ENCODE measurements at regions of chr9 and their contacts with region 1.

Region 1: DNA sequence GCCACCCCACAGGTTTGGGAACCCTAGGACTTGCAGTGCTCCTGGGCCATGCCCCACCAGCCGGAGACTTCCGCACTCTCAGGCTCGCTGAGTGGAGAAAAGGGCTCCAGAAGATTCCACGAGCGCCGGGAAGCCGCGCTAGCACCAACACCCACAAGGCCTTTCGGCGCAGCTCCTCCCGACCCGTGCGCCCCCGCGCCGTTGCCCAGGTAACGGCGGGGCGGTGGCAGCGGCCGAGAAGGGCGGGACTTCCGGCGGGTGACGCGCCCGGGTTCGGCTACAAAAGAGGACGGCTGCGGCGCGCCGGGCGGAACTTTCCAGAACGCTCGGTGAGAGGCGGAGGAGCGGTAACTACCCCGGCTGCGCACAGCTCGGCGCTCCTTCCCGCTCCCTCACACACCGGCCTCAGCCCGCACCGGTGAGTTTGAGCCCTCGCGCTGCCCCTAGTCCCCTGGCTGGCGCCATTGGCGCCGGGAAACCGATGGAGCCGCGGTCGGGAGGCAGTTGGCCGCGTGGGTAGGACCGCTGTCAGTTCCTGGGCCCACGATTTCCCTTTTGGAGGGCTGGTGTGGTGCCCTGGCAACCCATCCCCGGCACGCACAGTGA is at the start of gene DNAJA1:
- DNase-seq: peak; percentile 94
- ATAC-seq: peak; percentile 80
- H3K4me3 Mint-ChIP-seq: peak within 1 kb of the TSS; percentile 99
- H3K27ac Mint-ChIP-seq: peak within 1 kb of the TSS; percentile 92
- H3K4me1 Mint-ChIP-seq: peaks cover 55% of the 10 kb centered on the region
- H3K27me3 Mint-ChIP-seq: no peaks in the 10 kb centered on the region
- CTCF ChIP-seq: no peak
- total RNA-seq, gene DNAJA1: 139 to 143 TPM

Region 2: DNA sequence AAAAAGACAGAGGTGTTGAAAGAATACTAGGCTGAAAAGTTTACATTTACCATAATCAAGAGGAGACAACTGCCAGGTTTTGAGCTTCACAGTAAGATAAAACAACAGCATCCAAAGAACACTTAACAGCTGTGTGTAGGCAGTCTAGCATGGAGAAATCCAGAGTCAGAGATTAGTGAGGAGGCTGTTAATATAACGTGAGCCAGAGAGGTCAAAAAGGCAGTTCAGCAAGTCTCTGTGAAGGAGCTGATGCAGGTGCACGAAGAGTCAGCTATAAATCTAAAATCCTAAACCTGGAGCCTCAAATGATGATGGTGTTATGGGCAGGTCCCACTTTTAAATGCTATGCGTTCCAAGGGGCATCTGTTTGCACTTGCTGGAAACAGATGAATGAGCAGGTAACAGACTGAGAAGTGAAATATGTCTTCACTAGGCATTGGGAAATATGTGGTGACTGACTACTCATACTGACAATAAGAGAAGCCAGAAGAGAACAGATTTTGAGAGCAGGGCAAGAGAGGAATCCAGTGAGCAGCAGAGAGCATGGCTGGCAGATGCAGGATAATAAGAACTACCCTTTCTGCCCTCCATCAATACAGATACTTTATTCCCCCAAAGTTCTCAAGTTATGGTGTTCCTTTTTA is 32.4 kb before region 1 on chr9:
- CTCF ChIA-PET with region 1: no interaction called
- POLR2A ChIA-PET with region 1: interaction called, 68 read pairs
- intact Hi-C with region 1: no loop called
- DNase-seq: no peak
- ATAC-seq: no peak
- H3K4me3 Mint-ChIP-seq: no peak overlapping the region
- H3K27ac Mint-ChIP-seq: peak overlapping the region; percentile 1
- H3K4me1 Mint-ChIP-seq: peaks cover 20% of the 10 kb centered on the region
- H3K27me3 Mint-ChIP-seq: no peaks in the 10 kb centered on the region
- CTCF ChIP-seq: no peak

Region 3: GRCh38 chr9:33044127-33044673 is 19.1 kb after region 1 on chr9:
- CTCF ChIA-PET with region 1: interaction called, 11 read pairs
- POLR2A ChIA-PET with region 1: interaction called, 127 read pairs
- intact Hi-C with region 1: no loop called
- DNase-seq: peak; percentile 85
- ATAC-seq: peak; percentile 88
- H3K4me3 Mint-ChIP-seq: peak overlapping the region; percentile 69
- H3K27ac Mint-ChIP-seq: peak overlapping the region; percentile 47
- H3K4me1 Mint-ChIP-seq: peaks cover 15% of the 10 kb centered on the region
- H3K27me3 Mint-ChIP-seq: no peaks in the 10 kb centered on the region
- CTCF ChIP-seq: no peak

Region 4: DNA sequence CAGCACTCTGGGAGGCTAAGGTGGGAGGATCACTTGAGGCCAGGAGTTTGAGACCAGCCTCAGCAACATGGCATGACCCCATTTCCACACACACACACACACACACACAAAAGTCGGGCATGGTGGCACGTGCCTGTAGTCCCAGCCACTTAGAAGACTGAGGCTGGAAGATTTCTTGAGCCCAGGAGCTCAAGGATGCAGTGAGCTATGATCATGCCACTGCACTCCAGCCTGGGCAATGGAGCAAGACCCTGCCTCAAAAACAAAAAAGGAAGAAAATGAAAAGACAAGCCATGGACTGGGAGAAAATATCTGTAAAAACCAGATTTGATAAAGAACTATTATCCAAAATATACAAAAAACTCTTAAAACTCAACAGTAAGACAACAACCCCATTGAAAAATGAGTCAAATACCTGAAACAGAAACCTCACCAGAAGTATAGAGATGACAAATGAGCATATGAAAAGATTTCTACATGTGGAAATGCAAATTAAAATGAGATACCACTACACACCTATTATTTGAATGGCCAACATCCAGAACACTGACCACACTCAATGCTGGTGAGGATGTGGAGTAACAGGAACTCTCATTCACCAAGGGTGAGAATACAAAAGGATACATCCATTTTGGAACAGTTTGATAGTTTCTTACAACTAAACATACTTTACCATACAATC is 24.8 kb after region 1 on chr9:
- CTCF ChIA-PET with region 1: interaction called, 4 read pairs
- POLR2A ChIA-PET with region 1: interaction called, 127 read pairs
- intact Hi-C with region 1: no loop called
- DNase-seq: no peak
- ATAC-seq: peak; percentile 67
- H3K4me3 Mint-ChIP-seq: no peak overlapping the region
- H3K27ac Mint-ChIP-seq: peak overlapping the region; percentile 67
- H3K4me1 Mint-ChIP-seq: peaks cover 12% of the 10 kb centered on the region
- H3K27me3 Mint-ChIP-seq: no peaks in the 10 kb centered on the region
- CTCF ChIP-seq: no peak

Region 5: GRCh38 chr9:33065157-33066076 is 40.3 kb after region 1 on chr9:
- CTCF ChIA-PET with region 1: no interaction called
- POLR2A ChIA-PET with region 1: interaction called, 11 read pairs
- intact Hi-C with region 1: no loop called
- DNase-seq: no peak
- ATAC-seq: no peak
- H3K4me3 Mint-ChIP-seq: no peak overlapping the region
- H3K27ac Mint-ChIP-seq: peak overlapping the region; percentile 39
- H3K4me1 Mint-ChIP-seq: peaks cover 12% of the 10 kb centered on the region
- H3K27me3 Mint-ChIP-seq: no peaks in the 10 kb centered on the region
- CTCF ChIP-seq: no peak

Region 6: DNA sequence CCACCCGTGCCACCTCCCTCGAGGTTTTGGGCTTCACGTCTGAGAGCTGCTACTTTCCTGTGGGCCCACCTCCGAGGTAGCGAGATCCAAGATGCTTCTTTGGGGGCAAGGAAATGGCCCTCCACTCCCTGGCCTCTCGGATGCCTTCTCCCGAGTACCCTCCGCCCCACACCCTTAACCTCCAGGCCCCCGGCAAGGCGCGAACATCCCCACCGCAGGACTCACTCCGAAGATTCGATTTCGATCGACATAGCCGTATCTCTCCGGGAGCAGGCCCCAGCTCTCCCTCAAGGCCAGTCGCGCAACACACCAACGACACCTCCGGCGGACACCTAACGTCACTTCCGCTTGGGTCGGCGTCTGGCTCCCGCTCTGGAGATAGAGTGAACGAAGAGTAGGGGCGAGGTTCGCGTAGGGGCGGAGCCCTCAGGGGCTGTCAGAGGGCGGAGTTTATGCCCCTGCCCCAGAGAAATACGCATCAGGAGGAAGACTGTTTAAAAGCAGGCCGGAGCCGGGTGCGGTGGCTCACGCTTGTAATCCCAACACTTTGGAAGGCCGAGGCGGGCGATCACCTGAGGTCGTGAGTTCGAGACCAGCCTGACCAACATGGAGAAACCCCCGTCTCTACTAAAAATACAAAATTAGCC is 51.4 kb after region 1 on chr9 and contains the start of gene SMU1:
- CTCF ChIA-PET with region 1: no interaction called
- POLR2A ChIA-PET with region 1: interaction called, 14 read pairs
- intact Hi-C with region 1: no loop called
- DNase-seq: peak; percentile 98
- ATAC-seq: peak; percentile 97
- H3K4me3 Mint-ChIP-seq: peak within 1 kb of the TSS; percentile 94
- H3K27ac Mint-ChIP-seq: peak within 1 kb of the TSS; percentile 99
- H3K4me1 Mint-ChIP-seq: peaks cover 48% of the 10 kb centered on the region
- H3K27me3 Mint-ChIP-seq: no peaks in the 10 kb centered on the region
- CTCF ChIP-seq: no peak
- total RNA-seq, gene SMU1: 23.8 to 23.9 TPM

Region 7: GRCh38 chr9:33264473-33265177 is 239.6 kb after region 1 on chr9 and contains the starts of genes BAG1 and CHMP5:
- CTCF ChIA-PET with region 1: no interaction called
- POLR2A ChIA-PET with region 1: interaction called, 14 read pairs
- intact Hi-C with region 1: no loop called
- DNase-seq: peak; percentile 100
- ATAC-seq: peak; percentile 98
- H3K4me3 Mint-ChIP-seq: peak within 1 kb of the TSS; percentile 99
- H3K27ac Mint-ChIP-seq: peak within 1 kb of the TSS; percentile 96
- H3K4me1 Mint-ChIP-seq: peaks cover 41% of the 10 kb centered on the region
- H3K27me3 Mint-ChIP-seq: no peaks in the 10 kb centered on the region
- CTCF ChIP-seq: no peak
- total RNA-seq, gene BAG1: 55.6 to 61.6 TPM
- total RNA-seq, gene CHMP5: 64.6 to 74.2 TPM

Measured in activated CD8-positive, alpha-beta T cell treated with anti-CD3 and anti-CD28 coated beads for 36 hours (primary cell).